ENCODE measurements at regions of chr18 and their contacts with region 1.

Region 1: GRCh38 chr18:54173980-54174630 is 50.4 kb downstream of the MBD2 start:
- DNase-seq: no peak
- ATAC-seq: no peak
- H3K4me3 ChIP-seq: no peak overlapping the region
- H3K27ac ChIP-seq: no peak overlapping the region
- H3K4me1 ChIP-seq: peaks cover 0 to 20% (median 2%) of the 10 kb centered on the region in 12 donors
- H3K27me3 ChIP-seq: no peaks in the 10 kb centered on the region
- CTCF ChIP-seq: no peak
- POLR2A ChIP-seq: no peak

Region 2: GRCh38 chr18:54191352-54191751 is 17.2 kb after region 1 on chr18:
- intact Hi-C with region 1: loop called in 1 of 10 experiments (anchors 2 kb)
- DNase-seq: no peak
- ATAC-seq: no peak
- H3K4me3 ChIP-seq: no peak overlapping the region
- H3K27ac ChIP-seq: no peak overlapping the region
- H3K4me1 ChIP-seq: no peaks in the 10 kb centered on the region
- H3K27me3 ChIP-seq: no peaks in the 10 kb centered on the region
- CTCF ChIP-seq: no peak
- POLR2A ChIP-seq: no peak

Region 3: DNA sequence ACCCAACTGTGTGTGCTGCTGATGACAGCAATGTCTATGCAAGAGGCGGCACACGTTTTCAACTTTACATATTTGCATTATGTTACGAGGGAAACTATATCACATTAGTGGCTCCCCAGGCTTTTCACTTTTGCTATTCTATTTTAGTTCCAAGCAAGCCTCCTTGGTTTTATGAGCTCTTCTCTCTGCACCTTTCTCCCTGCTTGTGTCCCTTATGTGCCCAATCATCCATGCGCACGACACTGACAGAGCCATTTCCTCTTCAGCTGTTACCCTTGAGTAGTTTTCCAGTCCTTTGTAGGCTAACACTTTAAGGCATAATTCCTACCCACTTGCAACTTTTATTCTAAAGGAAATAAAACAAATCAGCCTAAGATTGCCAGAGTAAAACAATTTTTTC is 1259.5 kb after region 1 on chr18:
- intact Hi-C with region 1: no loop called
- DNase-seq: no peak
- ATAC-seq: no peak
- H3K4me3 ChIP-seq: no peak overlapping the region
- H3K27ac ChIP-seq: no peak overlapping the region
- H3K4me1 ChIP-seq: peaks cover 0 to 52% (median 20%) of the 10 kb centered on the region in 12 donors
- H3K27me3 ChIP-seq: no peaks in the 10 kb centered on the region
- CTCF ChIP-seq: no peak
- POLR2A ChIP-seq: no peak